T-cell (primary cell): ENCODE measurements at regions of chr2 and their contacts with region 1.

Region 1: DNA sequence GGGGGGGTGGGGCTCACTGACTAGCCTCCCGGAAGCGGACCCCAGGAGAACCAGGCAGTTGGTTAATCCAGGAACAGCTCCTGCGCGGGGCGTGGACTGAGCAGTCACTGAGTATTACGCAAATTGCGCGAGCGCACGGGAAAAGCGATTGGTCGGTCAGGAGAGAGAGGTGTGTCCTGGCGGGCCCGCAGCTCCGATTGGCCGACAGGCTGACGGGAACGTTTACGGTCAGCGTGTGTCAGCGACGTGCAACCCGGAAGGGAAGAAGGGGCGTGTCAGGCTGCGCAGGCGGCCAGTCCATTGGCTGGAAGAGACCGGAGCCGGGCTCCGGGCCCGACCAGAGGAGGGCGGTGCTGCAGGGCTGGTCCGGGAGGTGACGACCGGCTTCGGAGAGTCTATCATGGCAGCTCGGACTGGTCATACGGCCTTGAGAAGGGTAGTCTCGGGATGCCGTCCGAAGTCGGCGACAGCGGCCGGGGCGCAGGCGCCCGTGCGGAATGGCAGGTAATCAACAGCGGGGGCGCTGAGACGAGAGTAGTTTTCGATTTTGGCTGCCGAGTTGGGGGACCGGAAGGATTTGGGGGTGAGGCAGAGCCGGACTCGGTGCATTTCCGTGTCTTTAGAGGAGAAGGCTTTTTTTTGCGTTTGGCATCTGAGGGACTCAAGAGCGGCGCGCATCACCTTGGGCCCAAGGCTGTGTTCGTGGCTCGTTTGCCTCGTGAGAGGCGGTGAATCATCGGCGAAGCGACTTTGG is at the start of gene COQ10B:
- DNase-seq: peak; percentile 90 to 100 (median 98)
- ATAC-seq: peak; percentile 87 to 90 (median 90)
- H3K4me3 ChIP-seq: peak within 1 kb of the TSS; percentile 90 to 99
- H3K4me3 Mint-ChIP-seq: peak within 1 kb of the TSS; percentile 96 to 100 (median 99)
- H3K27ac ChIP-seq: peak within 1 kb of the TSS; percentile 100
- H3K27ac Mint-ChIP-seq: peak within 1 kb of the TSS; percentile 99 to 100
- H3K4me1 ChIP-seq: peaks cover 12 to 19% of the 10 kb centered on the region in 2 experiments
- H3K4me1 Mint-ChIP-seq: peaks cover 50 to 54% (median 53%) of the 10 kb centered on the region in 3 donors
- H3K27me3 ChIP-seq: peaks cover 0 to 9% of the 10 kb centered on the region in 2 experiments
- H3K27me3 Mint-ChIP-seq: no peaks in the 10 kb centered on the region
- total RNA-seq, gene COQ10B: 27.3 to 51.4 (median 28.0) TPM

Region 2: DNA sequence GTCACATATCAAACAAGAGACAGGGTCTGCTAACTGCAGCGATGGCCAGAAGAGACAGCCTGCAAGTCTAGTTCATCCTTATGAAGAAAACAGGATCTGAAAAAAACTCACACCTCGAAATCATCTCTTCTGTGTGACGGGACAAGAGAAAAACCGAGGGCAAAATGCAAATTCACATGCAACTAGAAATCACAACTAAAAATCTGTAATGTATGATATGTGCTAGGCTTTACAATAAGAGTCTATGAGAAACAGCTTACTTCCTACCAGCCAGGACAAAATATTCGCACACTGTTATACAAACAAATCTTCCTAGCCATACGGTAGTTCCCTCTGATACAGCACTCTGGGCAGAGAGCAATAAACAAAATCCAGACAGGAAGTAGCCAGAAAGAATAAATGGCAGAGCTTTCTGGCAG is 191.5 kb before region 1 on chr2:
- CTCF ChIA-PET with region 1: no interaction called
- POLR2A ChIA-PET with region 1: interaction called in 1 of 2 experiments, 13 read pairs
- DNase-seq: peak in 1 of 35 experiments; percentile 47
- ATAC-seq: peak; percentile 45 to 51 (median 48)
- H3K4me3 ChIP-seq: no peak overlapping the region
- H3K4me3 Mint-ChIP-seq: peak overlapping the region; percentile 26 to 61 (median 35)
- H3K27ac ChIP-seq: peak overlapping the region; percentile 88
- H3K27ac Mint-ChIP-seq: peak overlapping the region; percentile 87 to 91
- H3K4me1 ChIP-seq: peaks cover 61 to 72% of the 10 kb centered on the region in 2 experiments
- H3K4me1 Mint-ChIP-seq: peaks cover 82 to 85% (median 84%) of the 10 kb centered on the region in 3 donors
- H3K27me3 ChIP-seq: no peaks in the 10 kb centered on the region
- H3K27me3 Mint-ChIP-seq: no peaks in the 10 kb centered on the region

Region 3: GRCh38 chr2:197399887-197400540 is 53.3 kb before region 1 on chr2:
- CTCF ChIA-PET with region 1: no interaction called
- POLR2A ChIA-PET with region 1: interaction called, 3 to 10 read pairs
- DNase-seq: no peak
- ATAC-seq: no peak
- H3K4me3 ChIP-seq: no peak overlapping the region
- H3K4me3 Mint-ChIP-seq: no peak overlapping the region
- H3K27ac ChIP-seq: no peak overlapping the region
- H3K27ac Mint-ChIP-seq: no peak overlapping the region
- H3K4me1 ChIP-seq: no peaks in the 10 kb centered on the region
- H3K4me1 Mint-ChIP-seq: peaks cover 0 to 1% (median 0%) of the 10 kb centered on the region in 3 donors
- H3K27me3 ChIP-seq: no peaks in the 10 kb centered on the region
- H3K27me3 Mint-ChIP-seq: no peaks in the 10 kb centered on the region

Region 4: DNA sequence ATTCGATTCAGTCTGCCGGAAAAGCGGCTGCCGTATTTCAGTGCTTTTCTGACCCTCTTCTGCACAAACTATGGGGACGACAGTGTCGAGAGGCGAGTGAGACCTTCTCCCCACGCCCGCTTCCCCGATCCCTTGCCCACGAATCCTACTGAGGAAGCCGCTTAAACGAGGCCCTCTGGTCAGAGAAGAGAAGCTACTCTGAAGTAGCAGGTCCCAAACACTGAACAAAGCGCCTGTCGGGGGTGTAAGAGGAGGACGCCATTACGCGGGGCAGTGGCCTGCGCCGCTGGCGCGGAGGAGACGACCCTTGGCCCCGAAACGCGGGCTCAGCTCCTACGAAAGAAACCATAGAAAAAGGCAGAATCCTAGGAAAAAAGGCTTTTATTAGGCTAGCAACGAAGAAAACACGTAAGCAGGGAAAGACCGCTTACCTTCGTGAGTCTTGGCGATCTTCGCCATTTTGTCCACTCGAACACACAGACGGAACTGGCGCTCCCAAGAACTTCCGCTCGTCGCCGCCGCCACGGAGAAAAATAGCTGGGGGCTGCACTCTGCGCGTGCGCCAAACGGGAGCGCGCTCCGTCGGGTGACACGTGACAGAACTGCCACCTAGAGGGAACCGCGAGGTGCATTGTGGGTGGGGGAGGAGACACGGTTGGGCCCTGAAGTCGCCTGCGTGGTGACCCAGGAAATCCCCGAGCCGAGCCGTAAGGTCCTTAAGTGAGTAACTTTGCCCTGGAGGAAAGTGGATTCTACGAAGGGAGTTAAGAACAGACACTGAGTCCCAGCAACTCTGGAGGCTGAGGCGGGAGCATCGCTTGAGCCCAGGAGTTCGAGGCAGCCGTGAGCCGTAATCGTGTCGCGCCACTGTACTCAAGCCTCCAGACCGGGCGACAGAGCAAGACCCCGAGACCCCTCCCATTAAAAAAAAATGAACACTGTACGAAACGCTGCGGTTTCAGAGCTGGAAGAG is 18.5 kb before region 1 on chr2 and contains the start of gene SF3B1:
- CTCF ChIA-PET with region 1: interaction called, 6 to 10 read pairs
- POLR2A ChIA-PET with region 1: interaction called, 9 to 75 read pairs
- DNase-seq: peak; percentile 97 to 100 (median 99)
- ATAC-seq: peak; percentile 94 to 97 (median 95)
- H3K4me3 ChIP-seq: peak within 1 kb of the TSS; percentile 79 to 100
- H3K4me3 Mint-ChIP-seq: peak within 1 kb of the TSS; percentile 94 to 99 (median 99)
- H3K27ac ChIP-seq: peak within 1 kb of the TSS; percentile 99
- H3K27ac Mint-ChIP-seq: peak within 1 kb of the TSS; percentile 100
- H3K4me1 ChIP-seq: peaks cover 30 to 31% of the 10 kb centered on the region in 2 experiments
- H3K4me1 Mint-ChIP-seq: peaks cover 55 to 58% (median 55%) of the 10 kb centered on the region in 3 donors
- H3K27me3 ChIP-seq: no peaks in the 10 kb centered on the region
- H3K27me3 Mint-ChIP-seq: no peaks in the 10 kb centered on the region
- total RNA-seq, gene SF3B1: 468 to 579 (median 497) TPM

Region 5: GRCh38 chr2:197480165-197481036 is 27.1 kb after region 1 on chr2:
- CTCF ChIA-PET with region 1: interaction called in 1 of 2 experiments, 4 read pairs
- POLR2A ChIA-PET with region 1: interaction called in 1 of 2 experiments, 12 read pairs
- DNase-seq: no peak
- ATAC-seq: peak in 1 of 4 experiments; percentile 26
- H3K4me3 ChIP-seq: no peak overlapping the region
- H3K4me3 Mint-ChIP-seq: no peak overlapping the region
- H3K27ac ChIP-seq: no peak overlapping the region
- H3K27ac Mint-ChIP-seq: peak overlapping the region in 1 of 2 donors; percentile 39
- H3K4me1 ChIP-seq: no peaks in the 10 kb centered on the region
- H3K4me1 Mint-ChIP-seq: no peaks in the 10 kb centered on the region
- H3K27me3 ChIP-seq: no peaks in the 10 kb centered on the region
- H3K27me3 Mint-ChIP-seq: no peaks in the 10 kb centered on the region

Region 6: GRCh38 chr2:197499594-197500526 is 46.5 kb after region 1 on chr2 and contains the starts of genes HSPD1 and HSPE1:
- CTCF ChIA-PET with region 1: interaction called in 1 of 2 experiments, 4 read pairs
- POLR2A ChIA-PET with region 1: interaction called, 3 to 14 read pairs
- DNase-seq: peak; percentile 91 to 98 (median 94)
- ATAC-seq: peak; percentile 80 to 90 (median 84)
- H3K4me3 ChIP-seq: peak within 1 kb of the TSS; percentile 64 to 91
- H3K4me3 Mint-ChIP-seq: peak within 1 kb of the TSS; percentile 92 to 97 (median 95)
- H3K27ac ChIP-seq: peak within 1 kb of the TSS; percentile 98
- H3K27ac Mint-ChIP-seq: peak within 1 kb of the TSS; percentile 91 to 98
- H3K4me1 ChIP-seq: peaks cover 23 to 31% of the 10 kb centered on the region in 2 experiments
- H3K4me1 Mint-ChIP-seq: peaks cover 66 to 70% (median 66%) of the 10 kb centered on the region in 3 donors
- H3K27me3 ChIP-seq: no peaks in the 10 kb centered on the region
- H3K27me3 Mint-ChIP-seq: no peaks in the 10 kb centered on the region
- total RNA-seq, gene HSPD1: 125 to 164 (median 130) TPM
- total RNA-seq, gene HSPE1: 49.9 to 72.7 (median 55.1) TPM

Region 7: GRCh38 chr2:197793456-197793855 is 340.1 kb after region 1 on chr2:
- CTCF ChIA-PET with region 1: no interaction called
- POLR2A ChIA-PET with region 1: no interaction called
- DNase-seq: no peak
- ATAC-seq: no peak
- H3K4me3 ChIP-seq: no peak overlapping the region
- H3K4me3 Mint-ChIP-seq: no peak overlapping the region
- H3K27ac ChIP-seq: no peak overlapping the region
- H3K27ac Mint-ChIP-seq: no peak overlapping the region
- H3K4me1 ChIP-seq: no peaks in the 10 kb centered on the region
- H3K4me1 Mint-ChIP-seq: no peaks in the 10 kb centered on the region
- H3K27me3 ChIP-seq: peaks cover 2 to 3% of the 10 kb centered on the region in 2 experiments
- H3K27me3 Mint-ChIP-seq: peaks cover 21 to 26% of the 10 kb centered on the region in 2 donors